Gastrocnemius medialis (tissue), 4 donors: ENCODE measurements at regions of chr7 and their contacts with region 1.

Region 1: DNA sequence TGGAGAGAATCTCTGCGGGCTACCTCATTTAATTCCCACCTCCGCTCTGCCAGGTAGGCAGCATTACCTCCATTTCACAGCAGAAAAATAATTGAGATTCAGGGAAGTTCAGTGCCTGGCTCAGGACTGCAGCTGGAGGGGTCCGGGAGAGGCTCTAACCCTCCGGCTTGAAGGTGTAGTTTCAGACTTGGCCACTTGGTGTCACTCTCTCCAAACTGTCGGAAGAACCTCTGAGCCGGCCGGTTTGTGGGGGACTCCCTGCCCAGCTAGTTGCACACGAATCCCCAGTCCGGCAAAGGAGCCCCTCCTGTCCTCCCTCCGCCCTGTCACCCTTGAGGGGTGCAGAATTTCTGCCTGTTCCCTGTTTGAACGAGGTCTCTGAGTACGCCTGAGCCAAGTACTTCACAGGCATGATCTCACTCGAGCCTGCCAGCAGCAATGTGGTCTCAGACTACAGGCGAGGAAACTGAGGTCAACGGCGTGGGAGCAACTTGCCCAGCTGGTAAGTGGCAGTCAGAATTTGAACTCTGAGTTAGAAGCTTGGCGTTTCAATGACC is 144.7 kb upstream of the ZNF716 start:
- DNase-seq: no peak
- ATAC-seq: peak in 1 of 2 donors; percentile 51
- H3K4me3 ChIP-seq: no peak overlapping the region
- H3K27ac ChIP-seq: no peak overlapping the region
- H3K4me1 ChIP-seq: no peaks in the 10 kb centered on the region
- H3K27me3 ChIP-seq: no peaks in the 10 kb centered on the region
- CTCF ChIP-seq: peak in 1 of 5 experiments; percentile 50
- POLR2A ChIP-seq: no peak

Region 2: DNA sequence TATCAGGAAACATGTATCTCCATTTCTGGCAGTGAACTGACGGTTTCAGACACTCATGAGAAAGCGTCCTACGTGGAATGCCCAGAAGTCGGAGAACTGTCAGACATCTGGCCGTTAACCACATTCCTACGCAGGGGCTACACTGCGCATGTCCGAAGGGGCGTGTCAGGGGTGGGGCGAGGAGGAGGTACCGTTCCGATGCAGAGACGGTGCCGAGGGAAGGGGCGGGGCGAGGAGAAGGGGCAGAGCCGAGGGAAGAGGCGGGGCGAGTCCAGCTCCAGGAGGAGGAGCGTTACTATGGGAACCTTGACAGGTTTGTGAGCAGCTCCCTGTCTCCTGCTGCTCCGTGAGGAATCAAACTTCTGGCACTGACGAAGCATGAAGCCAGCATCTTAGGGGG is 822.1 kb before region 1 on chr7:
- in situ Hi-C with region 1: no loop called
- intact Hi-C with region 1: no loop called
- DNase-seq: no peak
- ATAC-seq: no peak
- H3K4me3 ChIP-seq: no peak overlapping the region
- H3K27ac ChIP-seq: no peak overlapping the region
- H3K4me1 ChIP-seq: no peaks in the 10 kb centered on the region
- H3K27me3 ChIP-seq: no peaks in the 10 kb centered on the region
- CTCF ChIP-seq: no peak
- POLR2A ChIP-seq: no peak

Region 3: GRCh38 chr7:57274535-57275283 is 30.6 kb before region 1 on chr7:
- in situ Hi-C with region 1: no loop called
- intact Hi-C with region 1: no loop called
- DNase-seq: no peak
- ATAC-seq: no peak
- H3K4me3 ChIP-seq: no peak overlapping the region
- H3K27ac ChIP-seq: no peak overlapping the region
- H3K4me1 ChIP-seq: no peaks in the 10 kb centered on the region
- H3K27me3 ChIP-seq: no peaks in the 10 kb centered on the region
- CTCF ChIP-seq: no peak
- POLR2A ChIP-seq: no peak

Region 4: DNA sequence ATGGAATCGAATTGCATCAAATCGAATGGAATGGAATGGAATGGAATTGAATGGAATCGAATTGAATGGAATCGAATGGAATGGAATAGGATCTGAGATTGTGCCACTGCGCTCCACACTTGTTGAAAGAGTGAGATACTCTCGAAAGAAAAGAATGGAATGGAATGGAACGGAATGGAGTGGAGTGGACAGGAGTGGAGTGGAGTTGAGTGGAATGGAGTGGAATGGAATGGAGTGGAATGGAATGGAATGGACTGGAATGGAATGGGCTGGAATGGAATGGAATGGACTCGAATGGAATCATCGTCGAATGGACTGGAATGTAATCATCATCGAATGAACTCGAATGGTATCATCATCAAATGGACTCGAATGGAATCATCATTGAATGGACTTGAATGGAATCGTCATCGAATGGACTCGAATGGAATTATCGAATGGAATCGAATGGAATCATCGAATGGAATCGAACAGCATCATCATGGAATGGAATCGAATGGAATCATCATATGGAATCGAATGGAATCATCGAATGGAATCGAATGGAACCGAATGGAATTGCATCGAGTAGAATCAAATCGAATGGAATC is 182.8 kb after region 1 on chr7:
- in situ Hi-C with region 1: no loop called
- intact Hi-C with region 1: loop called (anchors 5 kb)
- DNase-seq: no peak
- ATAC-seq: no peak
- H3K4me3 ChIP-seq: no peak overlapping the region
- H3K27ac ChIP-seq: no peak overlapping the region
- H3K4me1 ChIP-seq: no peaks in the 10 kb centered on the region
- H3K27me3 ChIP-seq: no peaks in the 10 kb centered on the region
- CTCF ChIP-seq: no peak
- POLR2A ChIP-seq: no peak